Prostate gland (tissue), 2 donors: ENCODE measurements at regions of chr5 and their contacts with region 1.

Region 1: GRCh38 chr5:36875790-36876388 is 680 bp upstream of the NIPBL start:
- DNase-seq: peak; percentile 78
- H3K4me3 ChIP-seq: peak overlapping the region; percentile 86 to 95
- H3K27ac ChIP-seq: peak overlapping the region; percentile 91 to 98
- H3K4me1 ChIP-seq: no peaks in the 10 kb centered on the region
- H3K27me3 ChIP-seq: no peaks in the 10 kb centered on the region
- CTCF ChIP-seq: peak; percentile 34 to 67 (median 52)
- POLR2A ChIP-seq: peak; percentile 19

Region 2: GRCh38 chr5:35319333-35320002 is 1556.4 kb before region 1 on chr5:
- intact Hi-C with region 1: no loop called
- DNase-seq: no peak
- H3K4me3 ChIP-seq: no peak overlapping the region
- H3K27ac ChIP-seq: no peak overlapping the region
- H3K4me1 ChIP-seq: no peaks in the 10 kb centered on the region
- H3K27me3 ChIP-seq: no peaks in the 10 kb centered on the region
- CTCF ChIP-seq: no peak
- POLR2A ChIP-seq: no peak

Region 3: GRCh38 chr5:36739751-36740221 is 136.1 kb before region 1 on chr5:
- intact Hi-C with region 1: loop called (anchors 5 kb)
- DNase-seq: peak; percentile 66
- H3K4me3 ChIP-seq: no peak overlapping the region
- H3K27ac ChIP-seq: no peak overlapping the region
- H3K4me1 ChIP-seq: peaks cover 6% of the 10 kb centered on the region
- H3K27me3 ChIP-seq: no peaks in the 10 kb centered on the region
- CTCF ChIP-seq: peak; percentile 57 to 88 (median 74)
- POLR2A ChIP-seq: no peak

Region 4: GRCh38 chr5:36944607-36945225 is 68.8 kb after region 1 on chr5:
- intact Hi-C with region 1: loop called (anchors 10 kb)
- DNase-seq: no peak
- H3K4me3 ChIP-seq: no peak overlapping the region
- H3K27ac ChIP-seq: no peak overlapping the region
- H3K4me1 ChIP-seq: no peaks in the 10 kb centered on the region
- H3K27me3 ChIP-seq: no peaks in the 10 kb centered on the region
- CTCF ChIP-seq: peak in 3 of 4 experiments; percentile 18 to 55 (median 35)
- POLR2A ChIP-seq: no peak

Region 5: DNA sequence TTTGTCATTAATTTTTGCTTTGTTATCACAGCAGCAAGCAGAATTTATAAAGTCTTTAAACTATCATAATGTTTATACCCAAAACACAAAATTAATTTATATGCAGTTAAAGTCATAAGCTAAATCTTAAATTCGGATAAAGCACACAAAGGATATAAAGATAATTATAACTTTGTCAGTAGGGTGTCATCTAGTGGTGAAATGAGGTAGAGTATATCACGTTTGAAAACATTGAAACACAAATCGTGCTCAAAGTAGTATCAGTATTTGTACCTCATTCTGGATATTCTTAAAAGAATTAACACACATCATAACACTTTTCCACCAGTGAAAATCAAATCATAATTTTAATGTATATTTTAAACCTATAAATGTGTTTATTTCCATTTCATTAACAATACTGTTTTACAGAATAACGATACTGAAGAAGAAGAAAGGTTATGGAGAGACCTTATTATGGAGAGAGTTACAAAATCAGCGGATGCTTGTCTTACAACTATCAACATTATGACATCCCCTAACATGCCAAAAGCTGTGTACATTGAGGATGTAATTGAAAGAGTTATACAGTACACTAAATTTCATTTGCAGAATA is 130.2 kb after region 1 on chr5:
- intact Hi-C with region 1: loop called (anchors 5 kb)
- DNase-seq: no peak
- H3K4me3 ChIP-seq: no peak overlapping the region
- H3K27ac ChIP-seq: no peak overlapping the region
- H3K4me1 ChIP-seq: no peaks in the 10 kb centered on the region
- H3K27me3 ChIP-seq: no peaks in the 10 kb centered on the region
- CTCF ChIP-seq: peak in 3 of 4 experiments; percentile 47 to 72 (median 70)
- POLR2A ChIP-seq: no peak

Region 6: GRCh38 chr5:37043688-37044087 is 167.8 kb after region 1 on chr5:
- intact Hi-C with region 1: no loop called
- DNase-seq: no peak
- H3K4me3 ChIP-seq: no peak overlapping the region
- H3K27ac ChIP-seq: no peak overlapping the region
- H3K4me1 ChIP-seq: no peaks in the 10 kb centered on the region
- H3K27me3 ChIP-seq: no peaks in the 10 kb centered on the region
- CTCF ChIP-seq: no peak
- POLR2A ChIP-seq: no peak

Region 7: GRCh38 chr5:37222176-37222575 is 346.3 kb after region 1 on chr5:
- intact Hi-C with region 1: no loop called
- DNase-seq: no peak
- H3K4me3 ChIP-seq: no peak overlapping the region
- H3K27ac ChIP-seq: no peak overlapping the region
- H3K4me1 ChIP-seq: no peaks in the 10 kb centered on the region
- H3K27me3 ChIP-seq: no peaks in the 10 kb centered on the region
- CTCF ChIP-seq: no peak
- POLR2A ChIP-seq: no peak

Region 8: GRCh38 chr5:38208782-38209378 is 1333.0 kb after region 1 on chr5:
- intact Hi-C with region 1: no loop called
- DNase-seq: peak; percentile 12
- H3K4me3 ChIP-seq: no peak overlapping the region
- H3K27ac ChIP-seq: no peak overlapping the region
- H3K4me1 ChIP-seq: no peaks in the 10 kb centered on the region
- H3K27me3 ChIP-seq: no peaks in the 10 kb centered on the region
- CTCF ChIP-seq: peak in 3 of 4 experiments; percentile 16 to 35 (median 29)
- POLR2A ChIP-seq: no peak